ENCODE measurements at regions of chr9 and their contacts with region 1.

Region 1: DNA sequence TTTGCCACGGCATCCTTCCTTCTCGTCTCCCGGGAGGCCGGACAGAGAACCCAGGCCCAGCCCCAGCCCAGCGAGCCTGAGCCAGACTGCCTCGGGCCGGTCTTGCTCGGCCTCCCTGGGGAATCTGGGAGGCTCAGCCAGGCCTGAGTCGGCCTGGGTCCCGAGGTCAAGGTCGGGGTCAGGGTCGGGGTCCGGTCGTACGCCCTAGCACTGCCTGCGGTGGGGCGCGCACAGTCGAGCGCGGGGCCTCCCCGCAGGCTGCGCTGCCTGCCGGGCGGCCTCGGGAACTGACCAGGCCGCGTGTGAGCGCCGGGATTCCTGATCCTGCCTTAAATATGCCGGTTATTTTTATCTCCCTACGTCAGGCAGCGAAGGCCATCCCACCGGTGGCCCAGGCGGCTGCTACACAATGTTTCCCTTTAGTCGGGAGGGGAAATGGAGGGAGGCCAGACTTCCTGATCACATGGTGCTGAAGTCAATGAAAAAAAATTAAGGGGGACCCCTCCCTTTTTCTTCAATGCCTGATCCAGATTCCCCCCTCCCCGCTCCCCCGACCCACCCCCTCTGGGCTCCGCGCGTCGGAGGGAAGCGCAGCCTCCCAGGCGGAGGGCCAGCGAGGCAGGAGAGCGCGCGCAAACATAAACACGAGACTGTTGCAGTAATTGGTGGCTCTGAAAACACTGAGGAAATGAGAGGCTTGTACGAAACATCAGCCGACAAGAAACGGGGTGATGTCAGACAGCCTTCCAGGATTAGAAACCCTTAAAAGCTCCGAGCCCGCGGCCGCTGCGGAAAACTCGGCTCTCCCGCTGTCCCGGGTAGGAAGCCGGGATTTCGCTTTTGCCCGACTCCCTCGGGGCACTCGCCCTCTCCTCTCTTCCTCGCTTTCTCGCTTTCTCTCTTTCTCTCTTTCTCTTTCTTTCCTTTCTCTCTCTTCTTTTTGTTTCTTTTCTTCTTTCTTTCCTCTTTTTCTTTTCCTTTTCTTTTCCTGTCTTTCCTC is 148.2 kb upstream of the KLF4 start:
- DNase-seq: peak; percentile 68 to 97
- H3K4me3 ChIP-seq: peak overlapping the region; percentile 42 to 52 (median 45)
- H3K27ac ChIP-seq: peak overlapping the region; percentile 87 to 97 (median 93)
- H3K4me1 ChIP-seq: peaks cover 18 to 36% (median 26%) of the 10 kb centered on the region in 4 donors
- H3K27me3 ChIP-seq: peaks cover 0 to 4% (median 0%) of the 10 kb centered on the region in 3 donors
- CTCF ChIP-seq: peak in 2 of 7 experiments; percentile 6 to 10
- EP300 ChIP-seq: peak; percentile 46
- POLR2A ChIP-seq: peak in 2 of 4 donors; percentile 42 to 79

Region 2: DNA sequence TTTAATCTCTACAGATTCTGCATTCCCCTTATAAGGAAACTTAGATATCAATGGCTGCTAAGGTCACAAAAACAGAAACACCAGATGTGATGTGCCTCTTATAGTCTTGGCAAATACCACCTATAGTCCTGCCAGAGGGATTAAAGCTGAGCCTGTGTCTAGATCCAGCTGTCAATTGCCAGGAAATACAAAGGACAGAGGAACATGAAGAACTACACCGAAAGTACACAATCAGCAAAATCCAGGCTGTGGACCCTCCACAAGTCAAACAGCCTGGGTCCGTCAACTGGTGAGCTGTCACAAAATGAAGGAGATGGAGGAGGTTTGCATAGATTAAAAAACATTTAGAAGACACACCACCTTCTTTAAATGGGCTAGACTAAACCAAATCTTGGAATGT is 233.6 kb before region 1 on chr9:
- intact Hi-C with region 1: no loop called
- DNase-seq: peak in 1 of 2 donors; percentile 63
- H3K4me3 ChIP-seq: no peak overlapping the region
- H3K27ac ChIP-seq: no peak overlapping the region
- H3K4me1 ChIP-seq: no peaks in the 10 kb centered on the region
- H3K27me3 ChIP-seq: no peaks in the 10 kb centered on the region
- CTCF ChIP-seq: no peak
- EP300 ChIP-seq: no peak
- POLR2A ChIP-seq: no peak

Region 3: GRCh38 chr9:107447810-107448209 is 189.9 kb before region 1 on chr9:
- intact Hi-C with region 1: no loop called
- DNase-seq: no peak
- H3K4me3 ChIP-seq: no peak overlapping the region
- H3K27ac ChIP-seq: no peak overlapping the region
- H3K4me1 ChIP-seq: no peaks in the 10 kb centered on the region
- H3K27me3 ChIP-seq: no peaks in the 10 kb centered on the region
- CTCF ChIP-seq: no peak
- EP300 ChIP-seq: no peak
- POLR2A ChIP-seq: no peak

Region 4: DNA sequence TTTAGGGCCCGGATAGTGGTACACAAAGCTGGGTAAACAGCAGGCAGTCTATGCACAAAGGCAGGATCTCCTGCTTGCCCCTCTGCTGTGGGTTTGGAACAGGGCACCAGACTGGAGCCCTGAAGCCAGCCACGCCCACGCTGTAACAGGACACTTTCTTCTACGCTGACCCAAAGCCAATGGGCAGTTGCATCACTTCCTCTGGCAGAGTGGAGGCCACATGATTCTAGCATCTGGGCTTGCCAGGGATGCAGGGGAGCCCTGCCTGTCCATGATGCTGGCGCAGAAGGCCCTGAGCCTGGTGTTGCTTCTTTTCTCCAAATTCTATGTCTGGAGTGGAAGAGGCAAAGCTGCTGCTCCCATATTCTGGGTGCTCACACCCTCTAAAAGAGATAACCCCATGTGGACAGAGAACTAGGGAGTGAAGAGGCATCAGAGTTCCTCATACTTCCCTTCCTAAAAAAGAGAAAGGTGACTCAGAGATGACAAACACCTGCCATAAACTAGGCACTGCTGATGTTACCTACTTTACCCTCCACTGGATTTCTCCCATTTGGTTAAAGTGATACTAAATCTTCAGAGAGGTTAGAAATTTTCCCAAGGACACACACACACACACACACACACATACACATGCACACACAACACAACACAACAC is 112.2 kb after region 1 on chr9:
- intact Hi-C with region 1: loop called (anchors 5 kb)
- DNase-seq: peak; percentile 72 to 75
- H3K4me3 ChIP-seq: no peak overlapping the region
- H3K27ac ChIP-seq: peak overlapping the region; percentile 59 to 85 (median 82)
- H3K4me1 ChIP-seq: peaks cover 27 to 37% (median 31%) of the 10 kb centered on the region in 4 donors
- H3K27me3 ChIP-seq: no peaks in the 10 kb centered on the region
- CTCF ChIP-seq: no peak
- EP300 ChIP-seq: peak; percentile 41
- POLR2A ChIP-seq: no peak

Measured in stomach (tissue), 19 donors.